T-cell (primary cell): ENCODE measurements at regions of chr13 and their contacts with region 1.

Region 1: GRCh38 chr13:40384976-40385857 is 281.2 kb downstream of the FOXO1 start:
- DNase-seq: no peak
- ATAC-seq: no peak
- H3K4me3 ChIP-seq: no peak overlapping the region
- H3K4me3 Mint-ChIP-seq: no peak overlapping the region
- H3K27ac ChIP-seq: no peak overlapping the region
- H3K27ac Mint-ChIP-seq: no peak overlapping the region
- H3K4me1 ChIP-seq: peaks cover 15 to 36% of the 10 kb centered on the region in 2 experiments
- H3K4me1 Mint-ChIP-seq: peaks cover 52 to 63% (median 53%) of the 10 kb centered on the region in 3 donors
- H3K27me3 ChIP-seq: no peaks in the 10 kb centered on the region
- H3K27me3 Mint-ChIP-seq: no peaks in the 10 kb centered on the region

Region 2: DNA sequence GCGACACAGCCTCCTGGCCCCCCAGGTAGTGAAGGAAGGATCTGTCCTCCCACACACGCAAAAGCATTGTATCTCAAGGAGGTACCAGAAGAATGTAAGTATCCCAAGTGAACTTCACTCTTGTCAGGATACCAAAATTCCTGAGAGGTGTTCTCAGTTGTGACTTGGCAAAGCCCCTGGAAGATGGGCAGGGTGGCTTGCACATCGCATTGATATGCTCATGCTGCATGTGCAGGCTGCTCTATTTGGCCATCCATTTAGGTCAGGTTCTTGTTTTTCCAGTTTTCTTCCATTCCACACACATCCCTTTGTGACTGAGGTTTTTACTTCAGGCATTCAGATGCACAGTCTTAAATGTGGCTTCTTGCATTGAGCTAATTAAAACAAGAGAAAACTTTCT is 101.6 kb before region 1 on chr13:
- CTCF ChIA-PET with region 1: no interaction called
- POLR2A ChIA-PET with region 1: no interaction called
- DNase-seq: no peak
- ATAC-seq: no peak
- H3K4me3 ChIP-seq: no peak overlapping the region
- H3K4me3 Mint-ChIP-seq: no peak overlapping the region
- H3K27ac ChIP-seq: no peak overlapping the region
- H3K27ac Mint-ChIP-seq: no peak overlapping the region
- H3K4me1 ChIP-seq: no peaks in the 10 kb centered on the region
- H3K4me1 Mint-ChIP-seq: peaks cover 0 to 11% (median 0%) of the 10 kb centered on the region in 3 donors
- H3K27me3 ChIP-seq: no peaks in the 10 kb centered on the region
- H3K27me3 Mint-ChIP-seq: no peaks in the 10 kb centered on the region

Region 3: DNA sequence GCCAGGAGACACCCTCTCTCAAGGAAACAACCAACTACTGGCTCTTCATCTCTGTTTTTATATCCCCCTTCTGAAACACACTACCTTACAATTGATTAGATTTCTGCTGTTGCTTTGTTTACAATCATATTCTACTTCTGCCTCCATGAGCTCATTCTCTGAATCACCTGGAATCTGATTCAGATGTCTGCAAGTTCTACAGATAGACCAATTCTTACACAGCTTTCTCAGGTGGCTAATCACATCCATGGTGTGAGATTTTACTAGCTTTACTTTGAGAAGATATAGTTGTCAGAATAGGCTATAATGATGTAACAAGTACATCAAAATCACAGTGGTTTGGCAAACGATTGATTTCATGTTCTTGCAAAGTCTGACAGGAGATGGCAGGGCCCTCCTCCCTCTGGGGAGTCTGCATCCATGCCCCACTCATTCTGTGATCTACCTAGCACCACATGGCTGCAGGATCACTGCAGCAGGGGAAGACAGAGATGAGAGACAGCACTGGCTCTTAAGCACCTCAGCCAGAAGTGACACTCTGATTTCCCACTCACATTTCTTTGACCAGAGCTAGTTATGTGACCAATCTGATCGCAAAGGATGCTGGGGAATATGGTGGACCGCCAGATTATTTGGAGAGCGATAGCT is 37.5 kb after region 1 on chr13:
- CTCF ChIA-PET with region 1: no interaction called
- POLR2A ChIA-PET with region 1: no interaction called
- DNase-seq: no peak
- ATAC-seq: peak in 2 of 4 experiments; percentile 23 to 55
- H3K4me3 ChIP-seq: no peak overlapping the region
- H3K4me3 Mint-ChIP-seq: no peak overlapping the region
- H3K27ac ChIP-seq: no peak overlapping the region
- H3K27ac Mint-ChIP-seq: peak overlapping the region; percentile 12 to 30
- H3K4me1 ChIP-seq: peaks cover 3 to 5% of the 10 kb centered on the region in 2 experiments
- H3K4me1 Mint-ChIP-seq: peaks cover 11 to 25% (median 19%) of the 10 kb centered on the region in 3 donors
- H3K27me3 ChIP-seq: no peaks in the 10 kb centered on the region
- H3K27me3 Mint-ChIP-seq: no peaks in the 10 kb centered on the region

Region 4: DNA sequence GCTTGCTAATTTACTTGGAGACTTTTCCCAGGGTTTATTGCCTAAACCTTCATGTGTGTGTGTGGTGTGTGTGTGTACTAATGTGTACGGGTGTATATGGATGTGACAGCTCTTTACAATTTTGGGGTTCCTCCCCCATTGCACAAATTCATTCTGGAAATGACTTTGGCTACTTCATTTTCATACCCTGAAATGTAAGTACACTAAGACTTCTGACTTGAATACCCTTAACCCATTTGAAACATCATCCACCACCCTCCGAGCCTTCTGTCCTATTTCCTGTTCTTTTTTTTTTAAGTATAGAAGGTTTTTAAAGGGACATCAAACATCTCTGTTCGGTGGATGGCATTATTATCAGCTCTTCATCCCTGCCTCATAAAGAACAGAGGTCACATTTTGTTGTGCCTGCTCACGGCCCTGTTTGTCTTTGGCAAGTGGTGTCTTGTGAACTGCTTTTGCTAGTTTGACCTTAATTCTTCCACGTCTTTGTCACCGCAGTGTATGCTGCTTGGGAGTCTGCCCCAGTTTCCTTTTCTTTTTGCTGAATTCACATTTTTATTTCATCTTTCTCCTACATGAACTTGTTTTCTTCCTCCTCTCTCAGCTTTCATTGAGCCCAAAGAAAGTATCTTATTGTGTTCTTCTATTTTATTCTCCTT is 52.9 kb after region 1 on chr13:
- CTCF ChIA-PET with region 1: interaction called in 1 of 2 experiments, 3 read pairs
- POLR2A ChIA-PET with region 1: interaction called in 1 of 2 experiments, 11 read pairs
- DNase-seq: peak in 1 of 35 experiments; percentile 20
- ATAC-seq: peak in 1 of 4 experiments; percentile 17
- H3K4me3 ChIP-seq: no peak overlapping the region
- H3K4me3 Mint-ChIP-seq: peak overlapping the region; percentile 51 to 75 (median 62)
- H3K27ac ChIP-seq: no peak overlapping the region
- H3K27ac Mint-ChIP-seq: peak overlapping the region; percentile 33 to 81
- H3K4me1 ChIP-seq: peaks cover 30 to 36% of the 10 kb centered on the region in 2 experiments
- H3K4me1 Mint-ChIP-seq: peaks cover 46 to 59% (median 56%) of the 10 kb centered on the region in 3 donors
- H3K27me3 ChIP-seq: no peaks in the 10 kb centered on the region
- H3K27me3 Mint-ChIP-seq: no peaks in the 10 kb centered on the region

Region 5: DNA sequence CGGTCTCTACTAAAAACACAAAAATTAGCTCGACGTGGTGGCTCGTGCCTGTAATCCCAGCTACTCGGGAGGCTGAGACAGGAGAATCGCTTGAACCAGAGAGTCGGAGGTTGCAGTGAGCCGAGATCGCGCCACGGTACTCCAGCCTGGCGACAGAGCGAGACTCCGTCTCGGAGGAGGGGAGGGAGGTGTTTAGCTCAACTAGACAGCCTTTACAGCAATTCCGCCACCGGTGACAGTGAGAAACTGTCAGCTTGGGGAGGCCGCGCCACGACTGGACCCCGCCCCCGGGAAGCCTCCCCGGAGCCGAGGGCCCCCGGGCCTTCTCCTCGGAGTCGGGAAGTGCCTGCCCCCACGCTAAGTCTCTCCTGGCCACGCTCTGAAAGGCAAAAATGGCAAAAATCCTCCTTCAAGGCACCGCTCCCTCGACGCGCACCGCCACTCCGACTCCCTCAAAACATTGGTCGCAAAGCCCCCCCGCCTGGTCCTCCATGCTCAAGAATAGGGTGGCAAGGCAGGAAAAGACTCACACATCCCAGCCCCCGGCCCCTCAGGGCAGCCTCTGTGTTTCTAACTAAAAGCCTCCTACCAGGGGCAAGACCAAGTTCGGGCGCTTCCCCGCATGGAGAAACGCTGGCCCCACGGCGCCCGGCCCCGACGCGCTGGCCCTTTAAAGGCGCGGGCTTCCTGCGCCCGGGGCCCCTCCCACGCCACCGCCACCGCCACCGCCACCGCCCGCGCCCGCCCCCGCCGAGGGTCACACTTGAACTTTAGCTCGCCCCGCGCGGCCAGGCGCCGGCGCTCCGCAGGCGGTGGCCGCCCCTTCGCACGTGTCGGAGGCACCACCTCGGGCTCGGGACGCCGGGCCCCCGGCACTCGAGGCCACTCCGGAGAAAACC is 279.1 kb after region 1 on chr13:
- CTCF ChIA-PET with region 1: interaction called in 1 of 2 experiments, 3 read pairs
- POLR2A ChIA-PET with region 1: interaction called in 1 of 2 experiments, 11 read pairs
- DNase-seq: peak; percentile 45 to 80 (median 66)
- ATAC-seq: peak; percentile 35 to 44 (median 38)
- H3K4me3 ChIP-seq: peak overlapping the region; percentile 71 to 96
- H3K4me3 Mint-ChIP-seq: peak overlapping the region; percentile 90 to 98 (median 96)
- H3K27ac ChIP-seq: peak overlapping the region; percentile 84
- H3K27ac Mint-ChIP-seq: peak overlapping the region; percentile 94 to 95
- H3K4me1 ChIP-seq: peaks cover 35 to 38% of the 10 kb centered on the region in 2 experiments
- H3K4me1 Mint-ChIP-seq: peaks cover 48 to 62% (median 56%) of the 10 kb centered on the region in 3 donors
- H3K27me3 ChIP-seq: no peaks in the 10 kb centered on the region
- H3K27me3 Mint-ChIP-seq: no peaks in the 10 kb centered on the region